Panc1 (cell line): ENCODE measurements at regions of chr1 and their contacts with region 1.

Region 1: DNA sequence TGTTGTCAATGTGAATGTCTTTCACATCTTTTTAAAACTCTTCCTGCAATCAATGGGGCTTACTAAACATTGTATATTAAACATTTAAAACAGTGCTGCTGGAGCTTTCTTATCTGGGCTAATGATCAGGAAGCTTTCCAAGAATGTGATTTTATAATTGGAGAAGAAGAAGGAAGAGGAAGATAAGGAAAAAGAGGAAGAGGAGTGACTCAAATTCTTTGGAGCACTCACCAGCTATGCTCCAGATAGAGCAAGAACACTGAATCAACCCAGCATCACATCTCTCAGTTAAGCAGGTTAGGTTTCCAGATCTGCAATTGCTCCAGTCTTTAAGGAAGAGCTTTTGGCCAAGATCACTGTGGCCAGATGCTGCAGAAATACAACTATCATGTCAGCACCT is 1.4 kb upstream of the SPRR2E start:
- DNase-seq: no peak
- ATAC-seq: no peak
- H3K4me3 ChIP-seq: no peak overlapping the region
- H3K27ac ChIP-seq: no peak overlapping the region
- H3K4me1 ChIP-seq: no peaks in the 10 kb centered on the region
- H3K27me3 ChIP-seq: peaks cover 6% of the 10 kb centered on the region; the same call in 1 of the 2 replicates
- CTCF ChIP-seq: no peak

Region 2: DNA sequence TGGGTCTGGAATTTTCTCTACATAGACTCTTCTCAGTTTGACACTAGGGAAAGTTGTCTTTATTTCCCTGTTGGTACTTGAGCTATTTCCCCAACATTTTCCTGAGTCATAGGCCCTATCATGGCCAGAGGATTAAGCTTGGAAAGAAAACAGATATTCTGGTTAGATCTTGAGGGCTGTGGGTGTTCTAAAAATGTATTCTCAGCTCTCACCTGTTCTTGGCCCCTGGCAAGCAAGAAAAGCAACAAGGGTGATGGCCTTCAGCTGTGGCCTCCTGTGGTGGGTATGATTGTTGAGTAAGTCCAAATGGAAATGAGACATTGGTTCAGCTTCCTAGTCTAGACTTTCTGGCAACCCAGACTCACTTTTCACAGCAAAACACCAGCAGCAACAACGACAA is 455.4 kb before region 1 on chr1:
- CTCF ChIA-PET with region 1: no interaction called
- POLR2A ChIA-PET with region 1: no interaction called
- in situ Hi-C with region 1: no loop called
- intact Hi-C with region 1: no loop called
- DNase-seq: no peak
- ATAC-seq: no peak
- H3K4me3 ChIP-seq: no peak overlapping the region
- H3K27ac ChIP-seq: no peak overlapping the region
- H3K4me1 ChIP-seq: no peaks in the 10 kb centered on the region
- H3K27me3 ChIP-seq: no peaks in the 10 kb centered on the region
- CTCF ChIP-seq: no peak

Region 3: GRCh38 chr1:153071511-153071910 is 24.3 kb before region 1 on chr1 and contains the start of gene SPRR2B:
- CTCF ChIA-PET with region 1: no interaction called
- POLR2A ChIA-PET with region 1: no interaction called
- in situ Hi-C with region 1: no loop called
- intact Hi-C with region 1: loop called (anchors 1 kb)
- DNase-seq: no peak
- ATAC-seq: no peak
- H3K4me3 ChIP-seq: no peak within 1 kb of the TSS
- H3K27ac ChIP-seq: no peak within 1 kb of the TSS
- H3K4me1 ChIP-seq: no peaks in the 10 kb centered on the region
- H3K27me3 ChIP-seq: no peaks in the 10 kb centered on the region
- CTCF ChIP-seq: no peak
- total RNA-seq, gene SPRR2B: not detected

Region 4: GRCh38 chr1:153306303-153307220 is 210.8 kb after region 1 on chr1:
- CTCF ChIA-PET with region 1: no interaction called
- POLR2A ChIA-PET with region 1: no interaction called
- in situ Hi-C with region 1: no loop called
- intact Hi-C with region 1: no loop called
- DNase-seq: no peak
- ATAC-seq: no peak
- H3K4me3 ChIP-seq: no peak overlapping the region
- H3K27ac ChIP-seq: no peak overlapping the region
- H3K4me1 ChIP-seq: no peaks in the 10 kb centered on the region
- H3K27me3 ChIP-seq: peaks cover 4% of the 10 kb centered on the region
- CTCF ChIP-seq: no peak